MCF 10A (cell line): ENCODE measurements at regions of chr22 and their contacts with region 1.

Region 1: GRCh38 chr22:24156913-24157821 is 24.1 kb upstream of the SUSD2 start:
- DNase-seq: peak; percentile 85
- H3K4me3 Mint-ChIP-seq: peak overlapping the region; percentile 70
- H3K27ac Mint-ChIP-seq: no peak overlapping the region
- H3K4me1 Mint-ChIP-seq: peaks cover 13% of the 10 kb centered on the region
- H3K27me3 Mint-ChIP-seq: no peaks in the 10 kb centered on the region
- CTCF ChIP-seq: peak; percentile 89

Region 2: DNA sequence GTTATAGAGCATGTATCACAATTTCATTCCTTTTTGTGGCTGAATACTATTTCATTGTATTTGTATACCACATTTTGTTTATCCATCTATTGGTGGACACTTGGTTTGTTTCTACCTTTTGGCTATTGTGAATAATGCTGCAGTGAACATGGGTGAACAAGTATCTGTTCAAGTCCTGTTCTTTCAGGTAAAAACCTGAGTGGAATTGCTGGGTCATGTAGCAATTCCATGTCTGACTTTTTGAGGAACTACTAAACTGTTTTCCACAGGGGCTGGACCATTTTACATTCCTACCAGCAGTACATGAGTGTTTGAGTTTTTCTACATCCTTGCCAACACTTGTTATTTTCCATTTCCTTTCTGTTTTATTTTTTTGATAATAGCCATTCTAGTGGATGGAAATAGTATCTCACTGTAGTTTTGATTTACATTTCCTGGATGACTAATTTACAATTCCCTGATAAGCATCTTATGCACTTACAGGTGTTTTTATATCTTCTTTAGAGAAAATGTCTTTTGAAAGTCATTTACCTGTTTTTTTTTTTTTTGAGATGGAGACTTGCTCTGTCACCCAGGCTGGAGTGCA is 133.9 kb before region 1 on chr22:
- CTCF ChIA-PET with region 1: no interaction called
- POLR2A ChIA-PET with region 1: no interaction called
- intact Hi-C with region 1: no loop called
- DNase-seq: no peak
- H3K4me3 Mint-ChIP-seq: no peak overlapping the region
- H3K27ac Mint-ChIP-seq: no peak overlapping the region
- H3K4me1 Mint-ChIP-seq: no peaks in the 10 kb centered on the region
- H3K27me3 Mint-ChIP-seq: no peaks in the 10 kb centered on the region
- CTCF ChIP-seq: no peak

Region 3: DNA sequence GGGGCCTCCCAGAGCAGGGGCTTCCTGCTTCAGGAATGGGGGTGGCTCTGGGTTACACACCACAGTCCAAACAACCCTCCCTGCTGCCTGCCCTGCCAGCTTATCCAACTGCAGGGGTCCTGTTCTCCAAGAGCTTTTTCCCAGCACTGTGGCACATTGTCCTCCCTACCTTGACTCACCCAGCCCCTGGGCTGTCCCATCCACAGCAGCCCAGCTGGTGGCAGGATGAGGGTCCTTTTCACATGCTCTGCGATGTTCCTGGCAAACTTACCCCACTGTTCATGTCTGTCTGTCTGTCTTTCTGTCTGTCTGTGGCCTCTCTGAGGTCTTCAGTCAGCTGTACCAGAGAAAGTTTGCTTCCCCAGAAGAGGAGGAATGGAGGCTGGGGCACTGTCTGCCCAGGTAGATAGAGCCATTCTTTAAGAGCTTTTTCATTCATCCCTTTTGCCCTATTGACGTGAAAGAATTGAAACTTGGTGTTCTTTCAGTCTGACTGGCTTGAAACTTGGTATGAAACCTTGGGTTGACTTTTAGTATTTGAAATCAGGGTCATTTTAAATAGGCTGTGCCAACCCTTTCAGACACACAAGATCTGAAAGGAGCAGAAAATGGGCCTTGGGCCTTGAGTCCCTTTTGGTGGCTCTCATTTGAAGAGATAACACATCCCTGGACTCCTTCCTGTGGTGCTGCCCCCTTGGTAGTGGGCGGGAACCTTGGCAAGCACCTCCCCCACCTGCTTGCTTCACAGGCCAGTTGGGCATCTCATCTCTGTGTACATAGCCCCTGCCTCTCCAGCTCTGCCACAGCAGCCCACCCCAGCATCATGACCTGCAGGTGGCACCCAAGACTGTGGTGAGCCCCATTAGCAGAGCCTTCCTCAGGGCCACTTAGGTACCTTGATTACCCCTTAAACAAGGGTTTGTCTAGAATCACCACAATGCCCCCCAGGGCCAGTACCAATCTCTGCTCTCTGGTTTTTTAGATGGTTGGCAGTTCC is 50.5 kb before region 1 on chr22:
- CTCF ChIA-PET with region 1: interaction called, 21 read pairs
- POLR2A ChIA-PET with region 1: no interaction called
- intact Hi-C with region 1: loop called (anchors 2 kb)
- DNase-seq: no peak
- H3K4me3 Mint-ChIP-seq: no peak overlapping the region
- H3K27ac Mint-ChIP-seq: peak overlapping the region; percentile 27
- H3K4me1 Mint-ChIP-seq: peaks cover 8% of the 10 kb centered on the region
- H3K27me3 Mint-ChIP-seq: no peaks in the 10 kb centered on the region
- CTCF ChIP-seq: peak; percentile 9

Region 4: GRCh38 chr22:24146194-24146616 is 11.0 kb before region 1 on chr22:
- CTCF ChIA-PET with region 1: interaction called, 8 read pairs
- POLR2A ChIA-PET with region 1: interaction called, 11 read pairs
- intact Hi-C with region 1: no loop called
- DNase-seq: peak; percentile 50
- H3K4me3 Mint-ChIP-seq: no peak overlapping the region
- H3K27ac Mint-ChIP-seq: peak overlapping the region; percentile 8
- H3K4me1 Mint-ChIP-seq: peaks cover 26% of the 10 kb centered on the region
- H3K27me3 Mint-ChIP-seq: no peaks in the 10 kb centered on the region
- CTCF ChIP-seq: no peak

Region 5: DNA sequence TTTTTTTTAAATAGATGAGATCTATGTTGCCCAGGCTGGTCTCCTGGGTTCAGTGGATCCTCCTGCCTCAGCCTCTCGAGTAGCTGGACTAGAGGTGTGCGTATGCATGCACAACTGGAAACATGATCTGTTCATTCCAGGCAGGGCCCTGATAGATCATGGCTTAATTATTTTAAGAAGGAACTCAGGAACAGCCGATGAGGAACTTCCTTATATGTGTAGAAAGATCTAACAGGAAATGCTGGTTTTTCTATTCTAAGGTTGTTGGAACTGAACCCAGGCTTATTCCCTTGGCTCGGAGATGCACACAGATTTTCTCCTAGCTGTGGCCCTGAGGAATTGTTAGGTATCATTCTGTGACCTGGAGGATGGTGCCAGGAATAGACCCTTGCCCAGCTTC is 145.8 kb after region 1 on chr22:
- CTCF ChIA-PET with region 1: no interaction called
- POLR2A ChIA-PET with region 1: no interaction called
- intact Hi-C with region 1: no loop called
- DNase-seq: no peak
- H3K4me3 Mint-ChIP-seq: no peak overlapping the region
- H3K27ac Mint-ChIP-seq: peak overlapping the region; percentile 17
- H3K4me1 Mint-ChIP-seq: peaks cover 27% of the 10 kb centered on the region
- H3K27me3 Mint-ChIP-seq: no peaks in the 10 kb centered on the region
- CTCF ChIP-seq: no peak